ENCODE measurements at regions of chr11 and their contacts with region 1.

Region 1: DNA sequence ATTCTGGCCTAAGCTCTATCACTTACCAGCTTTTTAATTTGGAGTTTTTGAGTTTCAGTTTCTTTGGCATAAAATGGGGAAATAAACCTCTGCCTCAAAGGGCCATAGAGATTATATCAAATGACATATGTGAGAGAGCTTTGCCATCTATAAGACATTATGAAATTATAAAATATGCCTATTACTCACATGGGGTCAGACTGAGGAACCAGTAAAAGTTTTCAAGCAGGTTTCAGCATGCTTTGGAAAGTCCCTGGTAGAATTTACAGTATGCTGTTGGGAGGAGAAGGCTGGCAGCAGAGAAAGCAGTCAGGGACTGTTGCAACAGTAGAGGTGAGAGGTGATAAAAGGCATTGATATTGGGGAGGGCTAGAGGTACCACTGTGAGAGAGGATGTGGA is 13.6 kb upstream of the MTNR1B start:
- DNase-seq: peak; percentile 94
- H3K4me3 ChIP-seq: no peak overlapping the region
- H3K27ac ChIP-seq: peak overlapping the region; percentile 44
- H3K4me1 ChIP-seq: peaks cover 16% of the 10 kb centered on the region
- H3K27me3 ChIP-seq: no peaks in the 10 kb centered on the region
- CTCF ChIP-seq: no peak

Region 2: GRCh38 chr11:93020248-93021046 is 64.6 kb after region 1 on chr11:
- CTCF ChIA-PET with region 1: no interaction called
- dilution Hi-C with region 1: no loop called
- in situ Hi-C with region 1: no loop called
- intact Hi-C with region 1: no loop called
- DNase-seq: peak; percentile 98
- H3K4me3 ChIP-seq: peak overlapping the region; percentile 6 to 30 (median 28)
- H3K27ac ChIP-seq: peak overlapping the region; percentile 98
- H3K4me1 ChIP-seq: peaks cover 34% of the 10 kb centered on the region
- H3K27me3 ChIP-seq: no peaks in the 10 kb centered on the region
- CTCF ChIP-seq: no peak

Region 3: DNA sequence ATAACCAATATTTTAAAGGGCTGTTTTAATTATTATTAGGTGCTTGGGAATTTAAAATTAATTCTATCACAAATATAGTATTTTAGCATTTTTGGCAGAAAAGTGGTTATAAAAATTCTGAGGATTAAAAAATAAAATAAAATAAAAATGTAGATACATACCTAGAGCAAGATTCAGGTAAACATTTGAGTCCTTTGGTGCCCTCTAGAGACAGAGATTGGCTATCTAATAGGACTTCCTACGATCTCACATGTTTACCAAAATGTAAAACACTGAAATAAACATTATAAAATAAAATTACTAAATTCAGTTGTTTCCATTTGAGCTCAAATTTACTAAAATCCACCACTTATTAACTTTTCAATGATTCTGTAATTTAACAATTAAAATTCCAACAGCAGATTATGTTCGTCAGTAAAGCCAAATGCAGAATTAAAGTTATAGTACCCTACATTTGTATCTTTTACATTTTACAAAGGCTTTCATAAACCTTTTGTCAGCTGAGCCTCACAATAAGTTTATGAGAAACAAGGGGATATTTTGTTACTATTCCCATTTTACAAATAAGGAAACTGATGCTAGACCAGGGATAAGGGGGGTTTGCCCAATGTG is 214.2 kb after region 1 on chr11:
- CTCF ChIA-PET with region 1: no interaction called
- dilution Hi-C with region 1: no loop called
- in situ Hi-C with region 1: no loop called
- intact Hi-C with region 1: loop called (anchors 5 kb)
- DNase-seq: peak; percentile 18
- H3K4me3 ChIP-seq: no peak overlapping the region
- H3K27ac ChIP-seq: no peak overlapping the region
- H3K4me1 ChIP-seq: no peaks in the 10 kb centered on the region
- H3K27me3 ChIP-seq: no peaks in the 10 kb centered on the region
- CTCF ChIP-seq: peak; percentile 42 to 65

Measured in mammary epithelial cell (primary cell).